PC-3 (cell line): ENCODE measurements at regions of chr12 and their contacts with region 1.

Region 1: DNA sequence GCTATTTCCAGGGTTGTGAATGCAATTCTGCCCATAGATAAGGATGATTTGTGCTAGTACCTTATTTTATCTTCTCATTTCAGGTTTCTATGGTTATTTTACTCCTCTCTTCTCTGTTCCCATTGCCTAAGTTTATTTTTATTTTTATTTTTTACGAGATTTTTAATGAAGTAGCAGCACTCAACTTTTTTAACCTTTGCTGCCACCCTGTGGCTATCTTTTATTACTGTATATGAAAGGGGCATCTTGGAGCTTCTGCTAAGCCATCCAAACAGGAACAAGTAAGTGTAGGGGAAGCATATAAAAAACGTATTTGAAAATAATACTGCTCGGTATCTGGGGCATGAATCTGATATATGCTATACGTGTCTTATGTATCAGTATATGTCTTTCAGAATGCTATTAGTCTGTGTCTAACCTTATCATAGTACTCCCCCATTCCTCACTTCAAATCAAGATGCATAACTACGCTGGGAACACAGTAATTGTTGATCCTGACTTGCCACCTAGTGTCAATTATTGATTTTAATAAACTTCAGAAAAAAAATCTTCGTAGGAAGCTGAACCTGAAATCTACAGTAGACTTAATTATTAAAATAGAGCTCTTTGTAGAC is 60.3 kb downstream of the KLRG1 start:
- DNase-seq: peak; percentile 56
- ATAC-seq: peak; percentile 63
- H3K4me3 ChIP-seq: no peak overlapping the region
- H3K27ac ChIP-seq: no peak overlapping the region
- H3K4me1 ChIP-seq: no peaks in the 10 kb centered on the region
- H3K27me3 ChIP-seq: peaks cover 34% of the 10 kb centered on the region
- CTCF ChIP-seq: peak; percentile 63

Region 2: DNA sequence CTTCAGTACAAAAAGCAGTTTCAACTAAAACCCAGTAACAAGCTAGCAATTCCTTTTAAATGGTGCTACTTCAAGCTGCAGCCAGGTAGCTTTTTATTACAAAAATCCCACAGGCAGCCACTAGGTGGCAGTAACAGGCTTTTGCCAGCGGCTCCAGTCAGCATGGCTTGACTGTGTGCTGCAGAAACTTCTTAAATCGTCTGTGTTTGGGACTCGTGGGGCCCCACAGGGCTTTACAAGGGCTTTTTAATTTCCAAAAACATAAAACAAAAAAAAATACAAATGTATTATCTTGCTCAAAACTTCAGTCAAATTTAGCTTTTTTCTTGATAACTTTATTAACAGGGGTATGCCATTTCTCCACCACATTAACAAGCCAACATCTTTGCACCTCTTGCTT is 505.3 kb before region 1 on chr12:
- CTCF ChIA-PET with region 1: interaction called, 3 read pairs
- POLR2A ChIA-PET with region 1: no interaction called
- intact Hi-C with region 1: loop called (anchors 10 kb)
- DNase-seq: peak; percentile 73
- ATAC-seq: peak; percentile 51
- H3K4me3 ChIP-seq: no peak overlapping the region
- H3K27ac ChIP-seq: no peak overlapping the region
- H3K4me1 ChIP-seq: no peaks in the 10 kb centered on the region
- H3K27me3 ChIP-seq: peaks cover 20% of the 10 kb centered on the region; the same call in 1 of the 2 replicates
- CTCF ChIP-seq: peak; percentile 79

Region 3: GRCh38 chr12:8662593-8662992 is 387.0 kb before region 1 on chr12 and contains the start of gene MFAP5:
- CTCF ChIA-PET with region 1: interaction called, 10 read pairs
- POLR2A ChIA-PET with region 1: no interaction called
- intact Hi-C with region 1: loop called (anchors 2 kb)
- DNase-seq: no peak
- ATAC-seq: no peak
- H3K4me3 ChIP-seq: no peak within 1 kb of the TSS
- H3K27ac ChIP-seq: no peak within 1 kb of the TSS
- H3K4me1 ChIP-seq: no peaks in the 10 kb centered on the region
- H3K27me3 ChIP-seq: peaks cover 22% of the 10 kb centered on the region
- CTCF ChIP-seq: no peak
- total RNA-seq, gene MFAP5: not detected in 2 replicates

Region 4: DNA sequence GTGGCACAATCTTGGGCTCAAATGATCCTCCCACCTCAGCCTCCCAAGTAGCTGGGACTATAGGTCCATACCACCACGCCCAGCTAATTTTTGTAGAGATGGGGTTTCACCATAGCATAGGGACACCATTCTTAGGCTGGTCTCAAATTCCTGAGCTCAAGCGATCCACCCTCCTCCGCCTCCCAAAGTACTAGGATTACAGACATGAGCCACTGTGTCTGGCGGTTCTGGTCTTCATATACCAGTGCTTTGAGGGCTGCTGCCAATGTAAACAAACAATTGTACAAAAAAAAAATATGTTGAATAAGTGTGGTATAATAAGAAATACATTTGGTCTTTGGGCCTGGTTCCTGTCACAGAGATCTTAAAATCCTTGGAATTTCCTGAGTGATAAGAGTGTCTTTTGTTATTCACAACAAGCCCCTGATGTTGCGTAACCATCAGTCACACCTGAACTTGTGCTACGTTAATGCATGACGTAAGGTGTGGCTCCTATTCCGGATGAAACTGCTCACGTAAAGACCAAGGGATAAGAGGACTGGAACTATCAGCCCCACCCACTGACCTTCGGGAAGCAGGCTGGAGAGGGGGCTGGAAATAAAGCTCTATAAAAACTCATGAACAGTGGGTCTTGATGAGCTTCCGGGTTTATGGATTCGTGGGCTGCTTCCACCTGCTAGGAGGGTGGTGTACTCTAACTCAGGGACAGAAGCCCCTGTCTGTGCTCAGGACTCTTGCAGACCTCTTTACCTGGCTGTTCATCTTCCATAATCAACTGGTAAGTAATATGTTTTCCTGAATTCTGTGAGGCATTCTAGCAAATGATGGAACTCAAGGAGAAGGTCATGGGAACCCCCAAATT is 368.4 kb before region 1 on chr12:
- CTCF ChIA-PET with region 1: no interaction called
- POLR2A ChIA-PET with region 1: no interaction called
- intact Hi-C with region 1: loop called (anchors 1 kb)
- DNase-seq: no peak
- ATAC-seq: no peak
- H3K4me3 ChIP-seq: no peak overlapping the region
- H3K27ac ChIP-seq: no peak overlapping the region
- H3K4me1 ChIP-seq: no peaks in the 10 kb centered on the region
- H3K27me3 ChIP-seq: no peaks in the 10 kb centered on the region
- CTCF ChIP-seq: no peak

Region 5: GRCh38 chr12:8914716-8915526 is 134.7 kb before region 1 on chr12:
- CTCF ChIA-PET with region 1: interaction called, 3 read pairs
- POLR2A ChIA-PET with region 1: no interaction called
- intact Hi-C with region 1: loop called (anchors 5 kb)
- DNase-seq: peak; percentile 37
- ATAC-seq: peak; percentile 87
- H3K4me3 ChIP-seq: peak overlapping the region; percentile 86
- H3K27ac ChIP-seq: no peak overlapping the region
- H3K4me1 ChIP-seq: peaks cover 11% of the 10 kb centered on the region
- H3K27me3 ChIP-seq: no peaks in the 10 kb centered on the region
- CTCF ChIP-seq: no peak